GM12878 (cell line): ENCODE measurements at regions of chr3 and their contacts with region 1.

Region 1: GRCh38 chr3:100590114-100590839 is 19.1 kb upstream of the ADGRG7 start:
- DNase-seq: peak; percentile 68
- ATAC-seq: peak; percentile 95
- H3K4me3 ChIP-seq: no peak overlapping the region
- H3K27ac ChIP-seq: no peak overlapping the region
- H3K4me1 ChIP-seq: no peaks in the 10 kb centered on the region
- H3K27me3 ChIP-seq: no peaks in the 10 kb centered on the region
- CTCF ChIP-seq: peak; percentile 77 to 91 (median 80); a peak in 5 of 6 replicates
- EP300 ChIP-seq: no peak
- POLR2A ChIP-seq: no peak
- RAD21 ChIP-seq: peak; percentile 95

Region 2: DNA sequence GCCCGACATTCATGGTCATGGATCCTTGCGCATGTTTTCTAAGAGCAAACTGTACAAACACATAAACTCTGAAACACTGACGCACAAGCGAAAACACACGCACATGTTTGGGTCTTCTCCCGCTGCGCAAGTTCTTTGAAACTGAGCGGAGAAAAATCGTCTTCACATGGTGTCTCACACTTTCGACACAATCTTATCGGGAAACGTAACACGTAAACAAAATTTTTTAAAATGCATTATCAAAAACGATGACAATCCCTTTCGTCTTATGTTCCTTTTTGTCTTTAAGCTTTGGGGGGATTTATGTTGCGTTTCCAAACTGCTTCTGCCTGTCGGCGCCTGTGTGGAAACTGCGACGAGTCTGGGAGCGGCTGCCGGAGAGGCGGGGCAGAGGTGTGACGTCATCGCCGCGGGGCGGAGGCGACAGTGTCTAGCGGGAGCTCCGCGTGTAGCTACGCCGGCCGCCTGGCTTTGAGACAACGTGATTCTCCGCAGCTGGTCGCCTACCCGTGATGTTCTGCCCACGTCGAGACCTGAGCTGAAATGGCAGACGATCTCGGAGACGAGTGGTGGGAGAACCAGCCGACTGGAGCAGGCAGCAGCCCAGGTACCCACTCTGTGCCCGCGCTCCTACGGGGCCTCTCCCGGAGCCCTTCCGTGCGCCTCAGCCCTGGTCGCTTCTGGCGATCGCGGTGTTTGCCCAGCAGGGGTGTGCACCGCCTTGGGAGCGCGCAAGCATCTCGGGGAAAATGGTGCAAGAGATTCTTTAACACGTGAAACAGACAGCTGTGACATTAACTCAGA is 772.6 kb before region 1 on chr3 and contains the start of gene CMSS1:
- CTCF ChIA-PET with region 1: no interaction called
- POLR2A ChIA-PET with region 1: no interaction called
- RAD21 ChIA-PET with region 1: no interaction called
- SMC1A ChIA-PET with region 1: no interaction called
- in situ Hi-C with region 1: no loop called
- intact Hi-C with region 1: no loop called
- DNase-seq: peak; percentile 81
- ATAC-seq: peak; percentile 95
- H3K4me3 ChIP-seq: peak within 1 kb of the TSS; percentile 75
- H3K27ac ChIP-seq: peak within 1 kb of the TSS; percentile 99
- H3K4me1 ChIP-seq: no peaks in the 10 kb centered on the region
- H3K27me3 ChIP-seq: no peaks in the 10 kb centered on the region
- CTCF ChIP-seq: peak in 2 of 3 experiments; percentile 5 to 14; a peak in 2 of 6 replicates
- EP300 ChIP-seq: peak in 1 of 2 experiments; percentile 98; a peak in 2 of 4 replicates
- POLR2A ChIP-seq: peak; percentile 95
- RAD21 ChIP-seq: no peak
- polyA plus RNA-seq, gene CMSS1: 77.8 to 118 TPM

Region 3: GRCh38 chr3:100316641-100317069 is 273.6 kb before region 1 on chr3:
- CTCF ChIA-PET with region 1: interaction called, 33 read pairs
- POLR2A ChIA-PET with region 1: no interaction called
- RAD21 ChIA-PET with region 1: interaction called, 32 read pairs
- SMC1A ChIA-PET with region 1: interaction called, 18 read pairs
- in situ Hi-C with region 1: loop called (anchors 5 kb)
- intact Hi-C with region 1: loop called (anchors 1 kb)
- DNase-seq: no peak
- ATAC-seq: peak; percentile 80
- H3K4me3 ChIP-seq: no peak overlapping the region
- H3K27ac ChIP-seq: no peak overlapping the region
- H3K4me1 ChIP-seq: peaks cover 3% of the 10 kb centered on the region; the same call in 1 of the 2 replicates
- H3K27me3 ChIP-seq: no peaks in the 10 kb centered on the region
- CTCF ChIP-seq: peak; percentile 66 to 67 (median 67)
- EP300 ChIP-seq: no peak
- POLR2A ChIP-seq: no peak
- RAD21 ChIP-seq: peak; percentile 81

Region 4: GRCh38 chr3:100455841-100456550 is 134.3 kb before region 1 on chr3:
- CTCF ChIA-PET with region 1: interaction called, 462 read pairs
- POLR2A ChIA-PET with region 1: interaction called, 3 read pairs
- RAD21 ChIA-PET with region 1: interaction called, 231 read pairs
- SMC1A ChIA-PET with region 1: interaction called, 279 read pairs
- in situ Hi-C with region 1: loop called (anchors 5 kb)
- intact Hi-C with region 1: no loop called
- DNase-seq: no peak
- ATAC-seq: no peak
- H3K4me3 ChIP-seq: no peak overlapping the region
- H3K27ac ChIP-seq: no peak overlapping the region
- H3K4me1 ChIP-seq: no peaks in the 10 kb centered on the region
- H3K27me3 ChIP-seq: no peaks in the 10 kb centered on the region
- CTCF ChIP-seq: no peak
- EP300 ChIP-seq: no peak
- POLR2A ChIP-seq: no peak
- RAD21 ChIP-seq: no peak

Region 5: GRCh38 chr3:100603469-100603868 is 13.2 kb after region 1 on chr3:
- CTCF ChIA-PET with region 1: interaction called, 40 read pairs
- POLR2A ChIA-PET with region 1: no interaction called
- RAD21 ChIA-PET with region 1: interaction called, 9 read pairs
- SMC1A ChIA-PET with region 1: interaction called, 59 read pairs
- in situ Hi-C with region 1: no loop called
- intact Hi-C with region 1: no loop called
- DNase-seq: no peak
- ATAC-seq: peak; percentile 58
- H3K4me3 ChIP-seq: peak overlapping the region; percentile 55
- H3K27ac ChIP-seq: peak overlapping the region; percentile 54
- H3K4me1 ChIP-seq: peaks cover 15% of the 10 kb centered on the region
- H3K27me3 ChIP-seq: no peaks in the 10 kb centered on the region
- CTCF ChIP-seq: peak; percentile 24 to 47 (median 34); a peak in 4 of 6 replicates
- EP300 ChIP-seq: 0 out of 4 replicates have a peak, but pooled peaks of 1 of the 2 experiments have one; percentile 9
- POLR2A ChIP-seq: no peak
- RAD21 ChIP-seq: peak; percentile 54

Region 6: DNA sequence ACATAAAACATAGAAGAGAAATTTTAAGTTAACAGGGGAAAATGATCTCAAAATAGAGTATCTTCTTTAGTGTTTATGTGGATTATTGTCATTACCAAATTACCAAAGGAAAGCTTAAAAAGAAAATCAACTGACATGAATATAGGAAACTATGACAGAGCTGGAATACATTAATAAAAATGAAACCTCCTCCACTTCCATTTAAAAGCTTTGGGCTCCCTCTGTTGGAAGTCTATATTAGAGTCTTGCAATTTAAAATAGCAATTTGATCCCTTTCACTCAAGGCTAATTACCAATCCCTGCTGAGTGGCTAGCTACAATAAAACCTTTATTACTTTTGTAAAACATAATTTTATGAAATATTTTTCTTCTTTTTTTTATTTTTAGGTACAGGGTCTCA is 791.5 kb after region 1 on chr3:
- CTCF ChIA-PET with region 1: no interaction called
- POLR2A ChIA-PET with region 1: no interaction called
- RAD21 ChIA-PET with region 1: no interaction called
- SMC1A ChIA-PET with region 1: no interaction called
- in situ Hi-C with region 1: no loop called
- intact Hi-C with region 1: loop called (anchors 5 kb)
- DNase-seq: no peak
- ATAC-seq: no peak
- H3K4me3 ChIP-seq: no peak overlapping the region
- H3K27ac ChIP-seq: no peak overlapping the region
- H3K4me1 ChIP-seq: peaks cover 11% of the 10 kb centered on the region; the same call in 1 of the 2 replicates
- H3K27me3 ChIP-seq: no peaks in the 10 kb centered on the region
- CTCF ChIP-seq: peak in 2 of 3 experiments; percentile 29 to 52; a peak in 3 of 6 replicates
- EP300 ChIP-seq: no peak
- POLR2A ChIP-seq: no peak
- RAD21 ChIP-seq: peak; percentile 66